ENCODE measurements at regions of chr18 and their contacts with region 1.

Region 1: GRCh38 chr18:49486953-49487710 is at the start of gene C18orf32:
- DNase-seq: peak; percentile 99
- H3K4me3 ChIP-seq: peak within 1 kb of the TSS; percentile 73 to 91 (median 80)
- H3K27ac ChIP-seq: peak within 1 kb of the TSS; percentile 92 to 97 (median 96)
- H3K4me1 ChIP-seq: peaks cover 32 to 58% (median 52%) of the 10 kb centered on the region in 4 donors
- H3K27me3 ChIP-seq: no peaks in the 10 kb centered on the region
- CTCF ChIP-seq: no peak
- EP300 ChIP-seq: no peak
- POLR2A ChIP-seq: peak; percentile 95
- total RNA-seq, gene C18orf32: 39.6 to 61.5 (median 55.2) TPM

Region 2: GRCh38 chr18:49459404-49460171 is 27.5 kb before region 1 on chr18:
- intact Hi-C with region 1: loop called (anchors 2 kb)
- DNase-seq: no peak
- H3K4me3 ChIP-seq: peak overlapping the region; percentile 82 to 100 (median 94)
- H3K27ac ChIP-seq: peak overlapping the region; percentile 90 to 93 (median 92)
- H3K4me1 ChIP-seq: peaks cover 15 to 41% (median 36%) of the 10 kb centered on the region in 4 donors
- H3K27me3 ChIP-seq: no peaks in the 10 kb centered on the region
- CTCF ChIP-seq: no peak
- EP300 ChIP-seq: no peak
- POLR2A ChIP-seq: no peak

Region 3: DNA sequence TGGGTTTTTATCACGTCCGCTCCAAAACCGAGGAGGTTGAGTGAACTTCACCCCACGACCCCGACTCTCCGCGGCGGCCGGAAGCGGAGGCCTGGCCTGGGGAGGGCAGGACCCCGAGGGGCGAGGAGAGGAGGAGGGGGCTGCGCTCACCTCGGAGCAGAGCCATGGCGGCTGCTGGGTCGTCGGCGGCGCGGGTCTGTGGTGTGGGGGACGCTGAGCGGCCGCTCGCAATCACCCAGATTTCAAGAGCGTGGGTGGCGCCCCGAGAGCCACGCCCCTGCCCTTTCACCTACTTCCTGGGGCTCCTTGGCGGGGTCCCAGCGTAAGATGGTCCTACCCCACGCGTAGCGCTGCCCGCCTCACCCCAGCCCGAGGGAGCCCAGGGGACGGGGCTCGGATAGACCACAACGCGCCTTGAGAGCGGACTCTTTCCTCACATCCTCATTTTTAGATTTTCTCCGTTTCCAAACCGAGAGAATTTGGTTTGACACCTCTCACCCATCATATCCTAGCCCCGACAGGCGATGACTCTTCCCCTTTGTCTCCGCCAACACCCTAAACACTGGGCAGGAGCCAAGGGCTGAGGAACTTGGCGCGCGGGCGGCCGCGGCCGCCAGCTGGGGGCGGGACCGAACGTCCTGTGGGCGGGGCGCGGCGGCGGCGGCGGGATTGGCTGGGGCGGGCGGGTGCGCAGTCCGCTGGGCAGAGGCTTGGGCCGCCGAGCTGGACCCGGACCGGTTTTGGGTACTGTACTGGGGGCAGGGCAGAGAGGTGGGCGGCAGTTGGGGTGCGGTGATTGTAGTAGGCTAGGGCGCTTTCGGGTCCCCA is 326.4 kb after region 1 on chr18 and contains the start of gene ACAA2:
- intact Hi-C with region 1: loop called (anchors 10 kb)
- DNase-seq: peak; percentile 95
- H3K4me3 ChIP-seq: peak within 1 kb of the TSS; percentile 74 to 89 (median 80)
- H3K27ac ChIP-seq: peak within 1 kb of the TSS; percentile 91 to 98 (median 96)
- H3K4me1 ChIP-seq: peaks cover 11 to 29% (median 26%) of the 10 kb centered on the region in 4 donors
- H3K27me3 ChIP-seq: no peaks in the 10 kb centered on the region
- CTCF ChIP-seq: no peak
- EP300 ChIP-seq: no peak
- POLR2A ChIP-seq: peak; percentile 84
- total RNA-seq, gene ACAA2: 46.9 to 101 (median 73.9) TPM

Region 4: DNA sequence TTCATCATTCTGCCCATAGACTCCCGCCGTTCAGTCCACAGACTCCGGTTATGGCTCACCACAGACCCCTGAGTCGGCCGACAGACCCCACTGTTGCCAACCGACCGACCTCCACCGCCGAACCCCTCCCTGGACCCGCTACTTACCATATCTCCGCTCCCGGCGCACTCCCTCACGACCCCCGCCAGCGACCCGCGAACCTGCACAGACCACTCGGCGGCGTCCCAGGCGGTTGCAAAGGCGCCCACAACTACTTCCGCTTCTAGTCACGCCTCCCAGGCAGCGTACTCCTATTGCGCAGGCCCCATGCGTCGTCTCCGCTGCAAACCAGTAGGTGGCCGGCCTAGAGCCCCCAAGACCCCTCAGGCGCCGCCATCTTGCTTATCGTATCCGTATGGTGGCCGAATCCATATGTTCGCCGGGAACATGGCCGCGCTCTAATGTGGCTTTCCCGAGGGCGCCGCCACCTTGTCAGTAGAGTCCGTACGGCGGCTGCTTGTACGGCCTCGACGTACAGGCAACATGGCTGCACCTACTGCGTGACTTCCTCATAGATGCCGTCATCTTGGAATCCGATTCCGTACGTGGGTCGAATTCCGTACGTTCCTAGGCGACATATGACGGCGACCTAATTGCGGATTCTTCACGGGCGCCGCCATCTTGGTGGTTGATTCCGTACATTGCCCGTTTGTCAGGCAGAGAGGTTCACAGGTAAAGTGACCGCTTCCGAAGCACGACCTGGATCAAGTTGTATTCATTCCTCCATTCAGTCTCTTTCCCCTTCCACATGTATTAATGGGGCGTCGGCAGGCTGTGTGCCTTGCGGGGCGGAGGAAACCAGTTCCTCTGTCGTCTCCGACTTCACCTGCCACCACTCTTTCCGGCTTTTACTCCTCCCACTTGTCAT is 800.6 kb after region 1 on chr18 and contains the start of gene CXXC1:
- intact Hi-C with region 1: loop called (anchors 10 kb)
- DNase-seq: peak; percentile 99
- H3K4me3 ChIP-seq: peak within 1 kb of the TSS; percentile 66 to 84 (median 76)
- H3K27ac ChIP-seq: peak within 1 kb of the TSS; percentile 82 to 88 (median 87)
- H3K4me1 ChIP-seq: peaks cover 5 to 18% (median 16%) of the 10 kb centered on the region in 4 donors
- H3K27me3 ChIP-seq: no peaks in the 10 kb centered on the region
- CTCF ChIP-seq: peak; percentile 33 to 58 (median 46)
- EP300 ChIP-seq: no peak
- POLR2A ChIP-seq: no peak
- total RNA-seq, gene CXXC1: 38.6 to 58.1 (median 49.2) TPM

Measured in esophagus muscularis mucosa (tissue), 4 donors.